HCT116 (cell line): ENCODE measurements at regions of chr1 and their contacts with region 1.

Region 1: DNA sequence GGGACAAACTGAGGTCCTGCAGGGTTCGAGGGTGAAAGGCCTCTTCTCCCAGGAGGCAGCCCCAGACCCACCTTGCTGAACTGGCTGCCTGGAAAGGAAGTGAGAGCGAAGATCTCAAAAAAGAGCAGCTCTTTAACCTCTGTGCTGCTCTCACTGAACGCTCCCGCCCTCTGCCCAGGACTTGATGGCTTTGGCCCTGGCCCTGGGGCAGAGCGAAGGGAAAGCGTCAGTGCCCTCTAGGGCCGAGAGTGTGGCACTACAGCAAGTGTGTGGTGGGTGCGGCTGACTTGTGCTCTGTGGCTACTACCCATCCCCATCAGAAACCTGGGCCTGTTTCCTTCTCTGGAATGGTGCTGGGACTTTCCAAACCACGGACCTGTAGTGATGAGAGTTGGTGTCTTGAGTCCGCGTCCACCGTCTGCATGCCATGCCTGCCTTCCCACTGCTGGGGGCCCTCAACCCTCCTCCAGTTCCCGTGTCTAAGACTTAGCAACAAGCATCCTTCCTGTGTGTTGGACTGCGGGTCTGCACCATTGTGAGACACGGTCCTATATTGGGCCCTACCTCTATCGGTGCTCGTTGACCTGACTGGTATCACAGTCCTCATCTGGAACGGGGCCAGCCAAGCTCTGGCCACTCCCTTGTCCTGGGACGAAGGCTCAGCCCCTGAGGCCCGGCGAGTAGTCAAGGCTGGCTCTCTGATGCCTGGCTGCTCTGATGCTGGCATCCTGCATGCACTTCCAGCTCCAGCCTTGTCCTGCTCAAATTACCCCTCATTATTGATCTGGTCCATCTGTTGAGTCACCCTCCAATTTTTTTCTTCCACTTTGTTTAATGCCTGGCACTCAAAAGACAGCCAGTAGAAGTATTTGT is 180.3 kb downstream of the DISC1 start:
- DNase-seq: peak; percentile 36
- ATAC-seq: peak; percentile 100
- H3K4me3 ChIP-seq: no peak overlapping the region
- H3K27ac ChIP-seq: no peak overlapping the region
- H3K4me1 ChIP-seq: peaks cover 0 to 9% of the 10 kb centered on the region in 2 experiments; a peak in 2 of 4 replicates
- H3K27me3 ChIP-seq: no peaks in the 10 kb centered on the region
- CTCF ChIP-seq: peak; percentile 70 to 89 (median 78); a peak in 5 of 6 replicates
- POLR2A ChIP-seq: no peak
- RAD21 ChIP-seq: peak; percentile 91

Region 2: DNA sequence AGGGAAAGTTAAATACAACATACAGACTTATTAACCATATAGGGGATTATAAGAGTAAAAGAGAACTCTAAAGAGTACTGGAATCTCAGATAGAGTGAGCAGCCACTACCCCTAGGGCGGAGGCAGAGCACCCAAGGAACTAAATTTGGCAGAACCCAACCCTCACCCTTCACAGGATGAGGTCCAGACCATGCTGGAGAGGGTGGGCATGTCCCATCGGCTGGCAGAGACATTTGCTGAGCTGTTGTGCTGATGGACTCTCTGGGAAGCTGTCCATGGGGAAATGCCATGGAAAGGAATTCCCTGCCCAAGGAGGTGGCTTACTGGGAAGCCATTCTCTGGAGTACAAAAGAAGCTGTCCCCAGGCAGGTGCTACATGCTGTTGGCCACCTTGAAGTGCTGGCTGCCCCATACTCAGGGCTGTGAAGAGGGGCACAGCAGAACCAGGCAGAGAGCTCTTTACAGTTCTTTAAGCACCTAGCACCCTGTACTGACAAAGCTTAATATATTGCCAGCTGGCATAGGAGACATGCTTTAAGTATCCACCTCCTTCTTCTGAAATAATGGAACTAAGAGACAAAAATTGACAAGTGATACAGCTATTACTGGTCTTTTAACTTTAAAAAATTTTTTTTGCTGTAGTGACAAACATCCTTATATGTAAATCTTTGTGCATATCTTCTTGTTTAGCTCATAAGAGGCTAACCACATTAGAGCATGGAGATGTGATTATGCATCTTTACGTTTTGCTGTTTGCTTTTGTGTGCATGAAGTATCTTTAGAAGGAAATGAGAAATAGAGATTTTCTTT is 248.8 kb before region 1 on chr1:
- CTCF ChIA-PET with region 1: no interaction called
- POLR2A ChIA-PET with region 1: no interaction called
- RAD21 ChIA-PET with region 1: no interaction called
- intact Hi-C with region 1: no loop called
- DNase-seq: no peak
- ATAC-seq: no peak
- H3K4me3 ChIP-seq: no peak overlapping the region
- H3K27ac ChIP-seq: no peak overlapping the region
- H3K4me1 ChIP-seq: no peaks in the 10 kb centered on the region
- H3K27me3 ChIP-seq: no peaks in the 10 kb centered on the region
- CTCF ChIP-seq: no peak
- POLR2A ChIP-seq: no peak
- RAD21 ChIP-seq: no peak

Region 3: DNA sequence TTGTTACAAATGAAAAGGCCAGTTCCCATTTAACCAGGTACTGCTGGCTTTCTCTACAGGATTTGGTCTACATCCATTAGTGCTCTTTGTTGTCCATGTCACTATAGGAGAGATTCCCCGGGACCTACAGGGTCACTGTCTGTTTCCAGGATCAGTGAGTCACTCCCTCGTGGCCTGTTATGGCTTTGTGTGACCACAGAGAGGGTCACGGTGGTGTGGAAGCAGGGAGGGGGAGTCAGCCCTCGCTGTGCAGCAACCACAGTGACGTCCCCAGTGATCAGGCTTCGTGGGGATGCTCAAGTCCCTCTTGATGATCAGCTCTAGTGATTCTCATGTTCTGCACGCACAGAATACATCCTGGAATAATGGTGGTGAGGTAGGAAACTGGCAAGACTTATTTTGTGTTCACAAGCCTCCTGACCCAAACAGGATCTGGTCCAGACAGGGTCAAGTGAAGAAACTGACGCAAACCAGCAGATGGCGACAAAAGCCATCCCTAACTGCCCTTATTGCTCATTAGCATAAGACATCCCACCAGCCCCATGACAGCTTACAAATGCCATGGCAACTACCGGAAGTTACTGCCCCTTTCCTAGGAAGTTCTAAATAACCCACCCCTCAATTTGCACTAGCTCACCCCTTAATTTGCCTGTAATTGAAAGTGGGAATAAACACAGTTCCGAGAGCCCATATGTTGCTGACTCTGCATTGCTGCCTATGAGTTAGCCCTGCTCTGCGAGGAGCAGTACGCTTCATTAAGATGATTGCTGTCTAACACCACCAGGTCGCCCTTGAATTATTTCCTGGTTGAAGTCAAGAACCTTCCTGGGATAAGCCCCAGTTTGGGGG is 81.8 kb before region 1 on chr1:
- CTCF ChIA-PET with region 1: no interaction called
- POLR2A ChIA-PET with region 1: no interaction called
- RAD21 ChIA-PET with region 1: interaction called in 1 of 2 experiments, 4 read pairs
- intact Hi-C with region 1: loop called (anchors 1 kb)
- DNase-seq: peak; percentile 76
- ATAC-seq: peak; percentile 99
- H3K4me3 ChIP-seq: no peak overlapping the region
- H3K27ac ChIP-seq: no peak overlapping the region
- H3K4me1 ChIP-seq: no peaks in the 10 kb centered on the region
- H3K27me3 ChIP-seq: no peaks in the 10 kb centered on the region
- CTCF ChIP-seq: peak; percentile 59 to 88 (median 79)
- POLR2A ChIP-seq: no peak
- RAD21 ChIP-seq: peak; percentile 79

Region 4: GRCh38 chr1:231757101-231757404 is 49.8 kb before region 1 on chr1:
- CTCF ChIA-PET with region 1: interaction called, 29 read pairs
- POLR2A ChIA-PET with region 1: no interaction called
- RAD21 ChIA-PET with region 1: interaction called, 5 to 8 read pairs
- intact Hi-C with region 1: loop called (anchors 1 kb)
- DNase-seq: peak; percentile 2
- ATAC-seq: peak; percentile 62
- H3K4me3 ChIP-seq: no peak overlapping the region
- H3K27ac ChIP-seq: no peak overlapping the region
- H3K4me1 ChIP-seq: no peaks in the 10 kb centered on the region
- H3K27me3 ChIP-seq: no peaks in the 10 kb centered on the region
- CTCF ChIP-seq: no peak; a peak in 1 of 6 replicates
- POLR2A ChIP-seq: no peak
- RAD21 ChIP-seq: no peak